ENCODE measurements at regions of chr10 and their contacts with region 1.

Region 1: DNA sequence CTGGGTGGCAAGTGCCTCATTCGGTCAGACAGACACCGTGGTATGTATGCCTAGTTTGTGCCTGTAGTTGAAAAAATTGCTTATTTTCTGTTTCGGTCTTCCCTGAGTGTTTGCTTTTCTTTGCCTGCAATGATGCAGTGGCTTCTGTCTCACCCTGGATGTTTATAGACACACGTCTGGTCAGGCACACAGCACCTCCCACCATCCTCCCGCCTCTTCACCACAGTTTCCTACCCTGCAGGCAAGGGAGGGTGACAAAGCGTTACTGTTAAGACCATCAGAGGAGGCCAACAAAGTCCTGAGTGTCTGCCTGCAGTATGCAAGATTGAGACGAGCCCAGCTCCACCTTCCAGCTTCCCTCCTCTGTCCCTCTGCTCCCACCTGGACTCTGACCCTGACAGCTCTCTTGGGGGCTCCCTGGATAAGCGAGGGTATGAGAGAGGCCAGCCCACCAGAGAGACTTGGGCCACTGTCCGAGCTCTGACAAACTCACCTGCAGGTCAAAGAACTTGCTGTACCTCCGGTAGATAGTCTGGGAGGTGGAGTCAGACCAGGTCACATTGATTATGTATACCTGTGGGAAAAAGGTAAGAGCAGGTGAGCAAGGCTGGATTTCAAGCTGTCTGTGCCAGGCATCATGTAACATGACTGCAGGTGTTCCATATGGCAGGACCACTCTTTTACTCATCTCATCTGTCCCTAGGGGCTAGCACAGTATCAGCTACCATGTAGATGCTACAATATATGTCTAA is 54.4 kb downstream of the SH3PXD2A start:
- DNase-seq: peak in 3 of 9 donors; percentile 7 to 66 (median 16)
- ATAC-seq: peak; percentile 82
- H3K4me3 ChIP-seq: no peak overlapping the region
- H3K4me3 Mint-ChIP-seq: peak overlapping the region in 3 of 10 donors; percentile 10 to 63 (median 19)
- H3K27ac ChIP-seq: no peak overlapping the region
- H3K27ac Mint-ChIP-seq: peak overlapping the region in 5 of 9 donors; percentile 4 to 89 (median 67)
- H3K4me1 ChIP-seq: peaks cover 9 to 13% of the 10 kb centered on the region in 2 donors
- H3K4me1 Mint-ChIP-seq: peaks cover 11 to 39% (median 24%) of the 10 kb centered on the region in 7 donors
- H3K27me3 ChIP-seq: no peaks in the 10 kb centered on the region
- H3K27me3 Mint-ChIP-seq: peaks cover 0 to 6% (median 0%) of the 10 kb centered on the region in 5 donors

Region 2: GRCh38 chr10:103759100-103759781 is 41.7 kb before region 1 on chr10:
- CTCF ChIA-PET with region 1: interaction called, 5 read pairs
- POLR2A ChIA-PET with region 1: no interaction called
- intact Hi-C with region 1: loop called in 1 of 2 experiments (anchors 5 kb)
- DNase-seq: peak in 7 of 9 donors; percentile 18 to 53 (median 39)
- ATAC-seq: peak; percentile 60
- H3K4me3 ChIP-seq: no peak overlapping the region
- H3K4me3 Mint-ChIP-seq: peak overlapping the region in 7 of 10 donors; percentile 8 to 77 (median 34)
- H3K27ac ChIP-seq: no peak overlapping the region
- H3K27ac Mint-ChIP-seq: peak overlapping the region in 5 of 9 donors; percentile 14 to 77 (median 69)
- H3K4me1 ChIP-seq: peaks cover 40 to 43% of the 10 kb centered on the region in 2 donors
- H3K4me1 Mint-ChIP-seq: peaks cover 32 to 70% (median 47%) of the 10 kb centered on the region in 7 donors
- H3K27me3 ChIP-seq: no peaks in the 10 kb centered on the region
- H3K27me3 Mint-ChIP-seq: peaks cover 0 to 30% (median 0%) of the 10 kb centered on the region in 5 donors

Region 3: GRCh38 chr10:103765981-103766380 is 35.0 kb before region 1 on chr10:
- CTCF ChIA-PET with region 1: interaction called, 5 read pairs
- POLR2A ChIA-PET with region 1: no interaction called
- intact Hi-C with region 1: loop called in 1 of 2 experiments (anchors 5 kb)
- DNase-seq: peak in 8 of 9 donors; percentile 69 to 85 (median 78)
- ATAC-seq: peak; percentile 71
- H3K4me3 ChIP-seq: peak overlapping the region; percentile 40
- H3K4me3 Mint-ChIP-seq: peak overlapping the region; percentile 47 to 87 (median 75)
- H3K27ac ChIP-seq: no peak overlapping the region
- H3K27ac Mint-ChIP-seq: peak overlapping the region in 8 of 9 donors; percentile 52 to 87 (median 72)
- H3K4me1 ChIP-seq: peaks cover 42 to 54% of the 10 kb centered on the region in 2 donors
- H3K4me1 Mint-ChIP-seq: peaks cover 45 to 86% (median 67%) of the 10 kb centered on the region in 7 donors
- H3K27me3 ChIP-seq: no peaks in the 10 kb centered on the region
- H3K27me3 Mint-ChIP-seq: peaks cover 0 to 27% (median 0%) of the 10 kb centered on the region in 5 donors

Region 4: GRCh38 chr10:103845972-103846371 is 45.0 kb after region 1 on chr10:
- CTCF ChIA-PET with region 1: no interaction called
- POLR2A ChIA-PET with region 1: no interaction called
- intact Hi-C with region 1: loop called (anchors 2 to 10 kb)
- DNase-seq: peak in 8 of 9 donors; percentile 17 to 55 (median 41)
- ATAC-seq: peak; percentile 77
- H3K4me3 ChIP-seq: peak overlapping the region; percentile 11
- H3K4me3 Mint-ChIP-seq: peak overlapping the region; percentile 2 to 77 (median 54)
- H3K27ac ChIP-seq: no peak overlapping the region
- H3K27ac Mint-ChIP-seq: peak overlapping the region in 8 of 9 donors; percentile 3 to 77 (median 33)
- H3K4me1 ChIP-seq: peaks cover 13% of the 10 kb centered on the region in 2 donors
- H3K4me1 Mint-ChIP-seq: peaks cover 8 to 30% (median 23%) of the 10 kb centered on the region in 7 donors
- H3K27me3 ChIP-seq: no peaks in the 10 kb centered on the region
- H3K27me3 Mint-ChIP-seq: peaks cover 0 to 23% (median 10%) of the 10 kb centered on the region in 5 donors

Measured in naive thymus-derived CD4-positive, alpha-beta T cell (primary cell).